Thyroid gland (tissue), 4 donors: ENCODE measurements at regions of chr7 and their contacts with region 1.

Region 1: DNA sequence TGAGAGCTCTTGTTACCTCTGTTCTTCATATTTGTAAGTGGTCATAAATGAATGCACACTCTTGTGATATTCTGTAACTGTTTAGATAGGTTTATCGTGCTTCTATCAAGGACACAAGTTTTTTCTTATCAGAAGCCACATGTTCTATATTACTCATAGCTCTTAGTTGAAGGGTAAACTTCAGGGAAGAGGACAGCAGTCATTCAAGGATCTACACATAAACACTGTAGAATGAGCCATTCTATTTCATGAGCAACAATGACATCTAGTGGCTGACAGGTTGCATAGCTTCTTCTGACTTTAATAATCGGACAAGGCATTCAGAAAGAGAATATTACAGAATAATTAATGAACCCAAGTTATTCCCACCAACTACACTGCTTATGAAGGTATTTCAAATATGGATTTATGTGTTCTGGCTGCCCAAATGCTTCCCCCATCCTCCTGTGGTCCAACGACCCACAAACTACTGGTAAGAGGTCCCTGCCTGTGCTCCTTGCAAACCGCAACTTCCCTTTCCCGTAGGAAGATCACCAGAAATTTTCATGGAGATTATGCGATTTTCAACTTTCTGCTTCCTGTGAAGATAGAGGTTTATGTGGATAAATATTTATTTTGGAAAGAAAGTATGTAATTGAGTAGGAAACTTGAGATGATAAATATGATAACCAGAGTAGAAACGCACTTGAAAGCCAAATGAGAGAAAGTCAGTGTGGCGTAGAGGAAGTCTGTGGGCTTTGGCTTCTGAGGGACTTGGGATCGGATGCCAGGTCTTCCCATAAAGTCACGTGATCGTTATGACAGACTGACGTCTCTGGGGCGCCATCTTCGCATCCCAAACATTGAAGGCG is 16.8 kb upstream of the ABCB5 start:
- DNase-seq: peak in 1 of 2 donors; percentile 3
- H3K4me3 ChIP-seq: no peak overlapping the region
- H3K27ac ChIP-seq: no peak overlapping the region
- H3K4me1 ChIP-seq: no peaks in the 10 kb centered on the region
- H3K27me3 ChIP-seq: no peaks in the 10 kb centered on the region
- CTCF ChIP-seq: peak; percentile 40 to 89 (median 73)
- POLR2A ChIP-seq: no peak

Region 2: DNA sequence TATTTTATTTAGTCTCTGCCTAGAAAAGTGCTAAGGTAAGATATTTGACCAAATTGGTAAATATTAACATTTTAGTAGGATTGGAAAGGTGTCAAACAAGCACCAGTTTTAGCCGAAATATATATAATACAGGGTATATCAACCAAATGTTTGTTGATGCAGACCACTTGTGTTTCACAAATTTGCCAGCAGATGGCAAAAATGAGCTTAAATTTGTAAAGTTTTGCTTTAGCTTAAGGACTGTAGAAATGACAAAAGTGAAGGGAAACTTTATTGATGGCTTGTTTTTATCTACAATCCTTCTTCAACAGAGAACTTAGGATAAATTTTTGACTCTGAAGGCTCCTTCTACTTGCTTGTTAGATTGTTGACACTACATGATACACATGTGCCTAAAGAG is 885.0 kb before region 1 on chr7:
- intact Hi-C with region 1: loop called (anchors 5 kb)
- DNase-seq: peak; percentile 18 to 25
- H3K4me3 ChIP-seq: no peak overlapping the region
- H3K27ac ChIP-seq: no peak overlapping the region
- H3K4me1 ChIP-seq: peaks cover 4 to 5% of the 10 kb centered on the region in 2 donors
- H3K27me3 ChIP-seq: no peaks in the 10 kb centered on the region
- CTCF ChIP-seq: peak in 5 of 6 experiments; percentile 19 to 65 (median 53)
- POLR2A ChIP-seq: no peak

Region 3: DNA sequence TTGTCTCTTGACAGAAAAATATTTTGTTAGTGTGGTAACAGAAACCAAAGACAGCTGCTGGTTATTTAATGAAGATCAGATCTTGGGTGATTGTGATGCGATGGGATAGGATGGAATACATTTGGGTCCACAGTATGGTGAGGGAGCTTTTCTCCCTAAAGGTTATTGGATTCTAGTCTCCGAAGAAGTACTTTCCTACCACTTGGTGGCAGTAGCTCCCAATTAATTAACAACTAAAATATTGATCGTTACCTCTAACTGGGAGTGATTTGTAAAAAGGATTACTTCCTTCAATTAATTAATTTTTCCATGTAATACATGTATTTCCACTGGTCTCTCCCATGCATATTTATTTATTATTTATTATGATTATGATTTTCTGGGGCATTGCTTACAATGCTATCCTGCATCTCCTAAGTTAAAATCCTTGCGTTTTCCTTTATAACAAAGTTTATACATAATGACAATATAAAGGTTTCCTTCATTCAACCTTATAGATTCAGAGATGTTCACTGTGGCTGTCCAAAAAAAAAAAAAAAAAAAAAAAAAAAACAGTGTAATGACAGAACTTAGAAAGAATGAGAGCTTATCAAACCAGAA is 850.8 kb before region 1 on chr7:
- intact Hi-C with region 1: loop called (anchors 5 kb)
- DNase-seq: no peak
- H3K4me3 ChIP-seq: no peak overlapping the region
- H3K27ac ChIP-seq: no peak overlapping the region
- H3K4me1 ChIP-seq: no peaks in the 10 kb centered on the region
- H3K27me3 ChIP-seq: no peaks in the 10 kb centered on the region
- CTCF ChIP-seq: peak in 3 of 6 experiments; percentile 46 to 52 (median 47)
- POLR2A ChIP-seq: no peak